ENCODE measurements at regions of chr9 and their contacts with region 1.

Region 1: DNA sequence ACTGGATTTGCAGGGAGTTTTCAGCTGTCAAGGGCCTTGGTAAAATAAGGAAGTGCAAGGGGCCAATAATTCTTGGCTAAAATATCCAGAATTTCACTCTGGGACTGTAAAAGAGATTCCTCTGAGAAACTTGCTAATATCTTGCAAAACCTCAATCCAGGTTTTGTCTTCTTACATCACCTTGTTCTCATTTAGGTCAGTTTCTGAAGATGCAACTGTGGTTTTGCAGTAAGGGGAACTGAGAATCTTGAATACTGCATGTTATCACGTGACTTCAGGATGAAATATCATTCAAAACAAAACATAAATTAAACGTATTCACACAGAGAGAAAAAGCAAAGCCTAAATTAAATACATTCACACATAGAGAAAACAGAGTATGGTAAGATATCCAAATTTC is 35.0 kb upstream of the RIC1 start:
- DNase-seq: no peak
- ATAC-seq: no peak
- H3K4me3 ChIP-seq: no peak overlapping the region
- H3K27ac ChIP-seq: no peak overlapping the region
- H3K4me1 ChIP-seq: peaks cover 0 to 5% of the 10 kb centered on the region in 2 donors
- H3K27me3 ChIP-seq: no peaks in the 10 kb centered on the region
- CTCF ChIP-seq: no peak
- POLR2A ChIP-seq: no peak

Region 2: GRCh38 chr9:4750023-4750673 is 843.8 kb before region 1 on chr9:
- in situ Hi-C with region 1: loop called in 2 of 4 experiments (anchors 10 to 25 kb)
- intact Hi-C with region 1: no loop called
- DNase-seq: no peak
- ATAC-seq: peak; percentile 56 to 65
- H3K4me3 ChIP-seq: no peak overlapping the region
- H3K27ac ChIP-seq: no peak overlapping the region
- H3K4me1 ChIP-seq: no peaks in the 10 kb centered on the region
- H3K27me3 ChIP-seq: no peaks in the 10 kb centered on the region
- CTCF ChIP-seq: peak in 4 of 5 experiments; percentile 42 to 65 (median 44)
- POLR2A ChIP-seq: no peak

Region 3: DNA sequence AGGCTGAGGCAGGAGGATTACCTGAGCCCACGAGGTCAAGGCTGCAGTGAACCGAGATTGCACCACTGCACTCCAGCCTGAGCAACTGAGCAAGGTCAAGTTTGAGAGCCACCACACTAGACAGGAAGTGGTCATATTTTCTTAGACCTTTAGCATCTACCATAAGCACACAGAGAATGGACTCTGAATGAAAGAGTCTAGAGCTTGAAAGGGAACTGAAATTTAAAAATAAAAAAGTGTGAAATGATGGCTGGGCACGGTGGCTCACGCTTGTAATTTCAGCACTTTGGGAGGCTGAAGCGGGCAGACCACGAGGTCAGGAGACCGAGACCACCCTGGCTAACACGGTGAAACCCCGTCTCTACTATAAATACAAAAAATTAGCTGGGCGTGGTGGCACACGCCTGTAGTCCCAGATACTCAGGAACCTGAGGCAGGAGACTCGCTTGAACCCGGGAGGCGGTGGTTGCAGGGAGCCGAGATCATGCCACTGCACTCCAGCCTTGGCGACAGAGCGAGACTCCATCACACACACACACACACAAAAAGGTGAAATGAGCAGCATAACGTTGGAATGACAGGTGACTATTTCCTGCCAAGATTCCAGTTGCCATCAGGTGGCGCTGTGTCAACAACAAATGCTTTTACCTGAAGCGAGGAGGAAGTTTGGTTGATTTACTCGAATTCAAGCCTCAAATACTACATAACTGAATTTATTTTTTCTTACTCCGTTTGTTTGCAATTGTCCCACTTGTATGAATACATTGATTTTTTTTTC is 831.6 kb before region 1 on chr9:
- in situ Hi-C with region 1: loop called in 2 of 4 experiments (anchors 10 to 25 kb)
- intact Hi-C with region 1: loop called (anchors 1 kb)
- DNase-seq: peak; percentile 42 to 65
- ATAC-seq: peak; percentile 69 to 80
- H3K4me3 ChIP-seq: peak overlapping the region; percentile 26 to 48 (median 32)
- H3K27ac ChIP-seq: peak overlapping the region; percentile 39 to 50 (median 40)
- H3K4me1 ChIP-seq: peaks cover 9 to 13% of the 10 kb centered on the region in 2 donors
- H3K27me3 ChIP-seq: no peaks in the 10 kb centered on the region
- CTCF ChIP-seq: peak; percentile 78 to 87 (median 81)
- POLR2A ChIP-seq: no peak

Region 4: DNA sequence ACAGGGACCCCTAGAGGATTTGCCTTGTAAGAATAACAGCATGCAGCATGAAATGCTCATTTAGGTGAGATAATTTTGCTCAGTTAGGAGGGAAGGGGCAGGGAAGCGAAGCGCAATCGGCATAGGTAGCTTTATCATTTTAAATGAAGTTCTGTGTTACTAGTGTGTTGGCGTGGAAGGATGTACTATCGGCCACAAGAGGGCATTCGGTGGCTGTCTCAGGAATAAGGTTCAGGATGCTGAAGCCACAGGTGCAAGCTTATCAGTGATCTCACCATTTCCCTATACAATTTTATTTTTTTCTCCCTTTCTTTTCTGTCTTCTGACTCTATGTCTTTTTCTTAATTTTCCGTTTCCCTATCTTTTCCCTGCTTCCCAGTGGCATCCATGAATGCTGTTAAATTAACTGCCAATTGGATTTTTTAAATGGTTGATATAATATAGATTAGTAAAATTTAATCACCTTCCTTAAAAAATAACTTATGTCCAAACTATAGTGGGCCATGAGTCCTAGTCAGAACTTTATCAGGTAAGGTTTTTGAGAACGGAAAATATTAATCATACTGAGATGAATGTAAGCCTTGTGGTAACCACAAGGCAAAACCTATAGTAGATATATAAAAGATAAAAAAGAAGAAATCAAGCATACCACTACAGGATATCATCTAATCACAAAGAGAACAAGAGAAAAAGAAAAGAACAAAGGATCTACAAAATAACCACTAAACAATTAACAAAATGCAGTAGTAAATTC is 407.3 kb before region 1 on chr9:
- in situ Hi-C with region 1: loop called in 3 of 4 experiments (anchors 10 to 25 kb)
- intact Hi-C with region 1: no loop called
- DNase-seq: peak in 1 of 2 donors; percentile 30
- ATAC-seq: no peak
- H3K4me3 ChIP-seq: no peak overlapping the region
- H3K27ac ChIP-seq: no peak overlapping the region
- H3K4me1 ChIP-seq: no peaks in the 10 kb centered on the region
- H3K27me3 ChIP-seq: no peaks in the 10 kb centered on the region
- CTCF ChIP-seq: peak in 3 of 5 experiments; percentile 39 to 56 (median 55)
- POLR2A ChIP-seq: no peak

Region 5: GRCh38 chr9:5459289-5459829 is 134.5 kb before region 1 on chr9:
- in situ Hi-C with region 1: loop called in 3 of 4 experiments (anchors 5 to 10 kb)
- intact Hi-C with region 1: no loop called
- DNase-seq: no peak
- ATAC-seq: no peak
- H3K4me3 ChIP-seq: no peak overlapping the region
- H3K27ac ChIP-seq: no peak overlapping the region
- H3K4me1 ChIP-seq: peaks cover 10 to 11% of the 10 kb centered on the region in 2 donors
- H3K27me3 ChIP-seq: no peaks in the 10 kb centered on the region
- CTCF ChIP-seq: no peak
- POLR2A ChIP-seq: no peak

Region 6: GRCh38 chr9:5575000-5575399 is 18.9 kb before region 1 on chr9:
- in situ Hi-C with region 1: no loop called
- intact Hi-C with region 1: no loop called
- DNase-seq: no peak
- ATAC-seq: no peak
- H3K4me3 ChIP-seq: no peak overlapping the region
- H3K27ac ChIP-seq: no peak overlapping the region
- H3K4me1 ChIP-seq: peaks cover 11 to 29% of the 10 kb centered on the region in 2 donors
- H3K27me3 ChIP-seq: no peaks in the 10 kb centered on the region
- CTCF ChIP-seq: no peak
- POLR2A ChIP-seq: no peak

Region 7: GRCh38 chr9:5735072-5735471 is 141.2 kb after region 1 on chr9:
- in situ Hi-C with region 1: no loop called
- intact Hi-C with region 1: no loop called
- DNase-seq: no peak
- ATAC-seq: peak in 1 of 2 donors; percentile 39
- H3K4me3 ChIP-seq: no peak overlapping the region
- H3K27ac ChIP-seq: no peak overlapping the region
- H3K4me1 ChIP-seq: no peaks in the 10 kb centered on the region
- H3K27me3 ChIP-seq: no peaks in the 10 kb centered on the region
- CTCF ChIP-seq: no peak
- POLR2A ChIP-seq: no peak